AG04450 (cell line): ENCODE measurements at regions of chr15 and their contacts with region 1.

Region 1: GRCh38 chr15:82100111-82100929 is 54.5 kb upstream of the MEX3B start:
- DNase-seq: no peak
- H3K4me3 ChIP-seq: no peak overlapping the region
- H3K27ac ChIP-seq: peak overlapping the region; percentile 11
- H3K27me3 ChIP-seq: no peaks in the 10 kb centered on the region
- CTCF ChIP-seq: no peak

Region 2: GRCh38 chr15:82159922-82160321 is 59.6 kb after region 1 on chr15:
- CTCF ChIA-PET with region 1: interaction called, 10 read pairs
- POLR2A ChIA-PET with region 1: no interaction called
- DNase-seq: peak; percentile 96
- H3K4me3 ChIP-seq: no peak overlapping the region
- H3K27ac ChIP-seq: peak overlapping the region; percentile 47
- H3K27me3 ChIP-seq: no peaks in the 10 kb centered on the region
- CTCF ChIP-seq: no peak

Region 3: DNA sequence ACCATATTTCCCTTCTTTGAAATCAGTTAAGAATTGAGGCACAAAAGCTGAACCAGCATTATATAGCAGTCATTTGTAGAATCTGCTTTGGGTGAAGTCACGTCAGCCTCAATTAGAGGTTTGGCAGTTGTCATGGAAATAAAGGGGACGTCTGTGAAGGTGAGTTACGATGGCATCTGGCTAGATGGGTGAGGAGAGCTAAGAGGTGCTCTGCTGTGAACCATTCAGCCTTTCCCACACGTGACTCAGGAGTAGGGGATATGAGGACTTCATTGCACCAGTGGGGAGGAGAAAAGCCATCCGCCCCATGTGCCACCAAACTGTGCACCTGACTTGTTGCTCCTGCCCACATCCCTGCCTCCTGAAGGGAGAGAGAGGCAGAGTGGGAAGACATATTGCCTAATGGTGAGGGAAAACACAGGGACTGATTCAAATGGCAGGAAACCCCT is 913.9 kb after region 1 on chr15:
- CTCF ChIA-PET with region 1: no interaction called
- POLR2A ChIA-PET with region 1: no interaction called
- DNase-seq: no peak
- H3K4me3 ChIP-seq: no peak overlapping the region
- H3K27ac ChIP-seq: no peak overlapping the region
- H3K27me3 ChIP-seq: no peaks in the 10 kb centered on the region
- CTCF ChIP-seq: no peak